B cell (primary cell): ENCODE measurements at regions of chr4 and their contacts with region 1.

Region 1: GRCh38 chr4:56530269-56531148 is 24.9 kb downstream of the ARL9 start:
- DNase-seq: peak; percentile 82
- ATAC-seq: peak; percentile 100
- H3K4me3 ChIP-seq: peak overlapping the region; percentile 56 to 77 (median 73)
- H3K4me3 Mint-ChIP-seq: no peak overlapping the region
- H3K27ac ChIP-seq: no peak overlapping the region
- H3K27ac Mint-ChIP-seq: peak overlapping the region; percentile 12
- H3K4me1 ChIP-seq: peaks cover 7 to 12% of the 10 kb centered on the region in 2 donors
- H3K4me1 Mint-ChIP-seq: peaks cover 4% of the 10 kb centered on the region
- H3K27me3 ChIP-seq: peaks cover 0 to 36% (median 22%) of the 10 kb centered on the region in 4 experiments
- H3K27me3 Mint-ChIP-seq: peaks cover 7% of the 10 kb centered on the region
- CTCF ChIP-seq: no peak

Region 2: GRCh38 chr4:56544573-56545131 is 14.1 kb after region 1 on chr4:
- CTCF ChIA-PET with region 1: interaction called, 6 read pairs
- POLR2A ChIA-PET with region 1: no interaction called
- intact Hi-C with region 1: loop called (anchors 1 kb)
- DNase-seq: peak; percentile 88
- ATAC-seq: peak; percentile 100
- H3K4me3 ChIP-seq: peak overlapping the region in 4 of 5 experiments; percentile 17 to 45 (median 38)
- H3K4me3 Mint-ChIP-seq: peak overlapping the region; percentile 77
- H3K27ac ChIP-seq: no peak overlapping the region
- H3K27ac Mint-ChIP-seq: peak overlapping the region; percentile 53
- H3K4me1 ChIP-seq: peaks cover 7% of the 10 kb centered on the region in 2 donors
- H3K4me1 Mint-ChIP-seq: peaks cover 12% of the 10 kb centered on the region
- H3K27me3 ChIP-seq: peaks cover 0 to 5% (median 3%) of the 10 kb centered on the region in 4 experiments
- H3K27me3 Mint-ChIP-seq: peaks cover 13% of the 10 kb centered on the region
- CTCF ChIP-seq: peak; percentile 99